Heart right ventricle (tissue), 16 donors: ENCODE measurements at regions of chr2 and their contacts with region 1.

Region 1: DNA sequence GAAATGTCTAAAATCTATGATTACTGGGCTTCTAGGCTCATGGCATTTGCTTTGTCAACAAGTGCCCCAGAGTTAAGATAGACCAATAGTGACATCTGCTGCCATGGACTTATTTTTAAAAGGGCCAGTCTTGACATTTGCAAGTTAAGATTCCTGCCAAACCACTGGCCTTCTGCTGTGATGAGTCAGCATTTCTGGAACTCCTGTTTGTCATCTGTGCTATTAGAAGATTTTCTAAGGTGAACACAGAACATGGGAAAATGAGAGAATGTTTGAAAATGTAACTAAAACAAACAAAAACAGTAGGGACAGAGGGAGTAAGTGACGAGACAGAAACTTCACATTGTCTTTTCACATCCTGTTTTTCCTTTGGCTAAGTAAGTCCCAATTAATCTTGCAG is 93.7 kb upstream of the WDR75 start:
- DNase-seq: peak in 1 of 2 donors; percentile 33
- ATAC-seq: peak; percentile 69 to 92 (median 80)
- H3K4me3 ChIP-seq: no peak overlapping the region
- H3K27ac ChIP-seq: peak overlapping the region in 8 of 10 donors; percentile 29 to 78 (median 54)
- H3K4me1 ChIP-seq: peaks cover 0 to 9% (median 0%) of the 10 kb centered on the region in 9 donors
- H3K27me3 ChIP-seq: no peaks in the 10 kb centered on the region
- CTCF ChIP-seq: peak in 6 of 9 donors; percentile 21 to 43 (median 35)

Region 2: GRCh38 chr2:188619146-188619545 is 728.4 kb before region 1 on chr2:
- intact Hi-C with region 1: loop called in 1 of 10 experiments (anchors 5 kb)
- DNase-seq: no peak
- ATAC-seq: no peak
- H3K4me3 ChIP-seq: no peak overlapping the region
- H3K27ac ChIP-seq: no peak overlapping the region
- H3K4me1 ChIP-seq: no peaks in the 10 kb centered on the region
- H3K27me3 ChIP-seq: no peaks in the 10 kb centered on the region
- CTCF ChIP-seq: no peak

Region 3: GRCh38 chr2:189096769-189097447 is 250.6 kb before region 1 on chr2:
- intact Hi-C with region 1: loop called in 2 of 10 experiments (anchors 5 kb)
- DNase-seq: no peak
- ATAC-seq: no peak
- H3K4me3 ChIP-seq: no peak overlapping the region
- H3K27ac ChIP-seq: no peak overlapping the region
- H3K4me1 ChIP-seq: peaks cover 0 to 28% (median 9%) of the 10 kb centered on the region in 9 donors
- H3K27me3 ChIP-seq: no peaks in the 10 kb centered on the region
- CTCF ChIP-seq: no peak

Region 4: DNA sequence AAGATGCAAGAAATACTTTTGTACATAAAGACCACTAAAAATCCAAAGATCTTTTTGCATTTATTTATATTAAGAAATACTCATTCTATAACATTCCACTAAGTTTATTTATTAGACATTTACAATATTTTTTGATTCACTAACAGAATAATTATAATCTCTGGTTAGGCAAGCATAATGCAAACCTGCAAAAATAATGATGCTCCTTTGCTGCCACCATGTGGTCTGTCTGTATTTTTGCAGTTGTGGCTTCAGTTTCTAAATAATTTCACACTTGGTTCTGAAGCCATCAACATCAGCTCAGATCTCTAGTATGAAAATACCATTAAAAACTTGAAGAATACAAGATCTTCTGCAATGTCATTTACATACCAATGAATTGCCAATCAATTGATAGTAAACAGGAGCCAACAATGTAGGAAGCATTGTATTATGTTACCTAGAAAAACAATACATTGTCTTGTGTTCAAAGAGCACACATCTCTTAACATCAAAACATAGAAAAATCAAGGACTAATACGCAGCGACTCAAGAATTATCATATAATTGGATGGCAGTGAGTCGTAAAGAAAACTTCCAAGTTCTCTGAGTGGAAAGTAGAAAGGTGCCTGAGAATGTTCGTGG is 64.9 kb after region 1 on chr2:
- intact Hi-C with region 1: loop called in 1 of 10 experiments (anchors 5 kb)
- DNase-seq: peak in 1 of 2 donors; percentile 33
- ATAC-seq: peak in 7 of 8 donors; percentile 35 to 71 (median 62)
- H3K4me3 ChIP-seq: no peak overlapping the region
- H3K27ac ChIP-seq: peak overlapping the region in 5 of 10 donors; percentile 13 to 40 (median 31)
- H3K4me1 ChIP-seq: peaks cover 0 to 16% (median 0%) of the 10 kb centered on the region in 9 donors
- H3K27me3 ChIP-seq: no peaks in the 10 kb centered on the region
- CTCF ChIP-seq: peak; percentile 51 to 83 (median 77)

Region 5: DNA sequence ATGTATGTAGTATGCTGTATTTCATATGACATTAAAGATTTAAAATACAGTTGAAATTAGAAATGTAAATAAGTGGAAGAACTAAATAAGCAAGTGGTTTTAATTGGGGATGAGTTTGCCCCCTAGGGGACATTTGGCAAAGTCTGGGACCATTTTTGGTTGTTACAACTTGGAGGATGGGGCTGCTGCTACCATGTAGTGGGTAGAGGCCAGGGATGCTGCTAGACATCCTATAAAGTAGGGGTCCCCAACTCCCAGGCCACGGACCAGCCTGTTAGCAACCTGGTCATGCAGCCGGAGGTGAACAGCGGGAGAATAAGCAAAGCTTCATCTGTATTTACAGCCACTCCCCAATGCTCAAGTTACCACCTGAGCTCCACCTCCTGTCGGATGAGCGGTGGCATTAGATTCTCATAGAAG is 285.9 kb after region 1 on chr2:
- intact Hi-C with region 1: no loop called
- DNase-seq: peak in 1 of 2 donors; percentile 19
- ATAC-seq: peak in 2 of 8 donors; percentile 13 to 54
- H3K4me3 ChIP-seq: no peak overlapping the region
- H3K27ac ChIP-seq: no peak overlapping the region
- H3K4me1 ChIP-seq: peaks cover 0 to 8% (median 0%) of the 10 kb centered on the region in 9 donors
- H3K27me3 ChIP-seq: no peaks in the 10 kb centered on the region
- CTCF ChIP-seq: peak; percentile 10 to 65 (median 54)

Region 6: GRCh38 chr2:189821953-189822748 is 474.6 kb after region 1 on chr2:
- intact Hi-C with region 1: no loop called
- DNase-seq: no peak
- ATAC-seq: peak in 1 of 8 donors; percentile 50
- H3K4me3 ChIP-seq: no peak overlapping the region
- H3K27ac ChIP-seq: no peak overlapping the region
- H3K4me1 ChIP-seq: no peaks in the 10 kb centered on the region
- H3K27me3 ChIP-seq: no peaks in the 10 kb centered on the region
- CTCF ChIP-seq: no peak